AG04449 (cell line): ENCODE measurements at regions of chr2 and their contacts with region 1.

Region 1: GRCh38 chr2:62660582-62661262 is 44.8 kb upstream of the EHBP1 start:
- DNase-seq: peak; percentile 94
- H3K4me3 ChIP-seq: no peak overlapping the region
- CTCF ChIP-seq: no peak

Region 2: GRCh38 chr2:62398356-62398755 is 262.4 kb before region 1 on chr2:
- CTCF ChIA-PET with region 1: no interaction called
- POLR2A ChIA-PET with region 1: no interaction called
- DNase-seq: no peak
- H3K4me3 ChIP-seq: no peak overlapping the region
- CTCF ChIP-seq: no peak

Region 3: DNA sequence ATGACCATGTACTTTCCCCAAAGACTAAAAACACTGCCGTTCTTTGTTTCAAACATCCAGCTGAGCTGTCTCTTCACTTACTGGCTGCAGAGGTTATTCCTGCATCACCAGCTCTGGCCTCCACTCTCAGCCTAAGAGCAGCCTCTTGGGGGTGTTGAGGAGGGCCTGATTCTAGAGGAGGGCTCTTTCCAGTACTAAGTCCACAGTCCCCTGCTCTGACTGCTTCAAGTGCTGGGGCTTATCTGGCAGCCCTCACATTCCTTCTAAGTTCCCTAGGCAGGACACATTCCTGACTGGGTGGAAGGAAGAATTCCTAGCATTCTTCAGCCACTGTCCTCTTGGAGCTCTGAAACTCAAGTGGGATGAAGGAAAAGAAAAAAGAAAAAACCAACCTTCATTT is 11.9 kb after region 1 on chr2:
- CTCF ChIA-PET with region 1: interaction called, 4 read pairs
- POLR2A ChIA-PET with region 1: interaction called, 11 read pairs
- DNase-seq: peak; percentile 73
- H3K4me3 ChIP-seq: no peak overlapping the region
- CTCF ChIP-seq: no peak

Region 4: DNA sequence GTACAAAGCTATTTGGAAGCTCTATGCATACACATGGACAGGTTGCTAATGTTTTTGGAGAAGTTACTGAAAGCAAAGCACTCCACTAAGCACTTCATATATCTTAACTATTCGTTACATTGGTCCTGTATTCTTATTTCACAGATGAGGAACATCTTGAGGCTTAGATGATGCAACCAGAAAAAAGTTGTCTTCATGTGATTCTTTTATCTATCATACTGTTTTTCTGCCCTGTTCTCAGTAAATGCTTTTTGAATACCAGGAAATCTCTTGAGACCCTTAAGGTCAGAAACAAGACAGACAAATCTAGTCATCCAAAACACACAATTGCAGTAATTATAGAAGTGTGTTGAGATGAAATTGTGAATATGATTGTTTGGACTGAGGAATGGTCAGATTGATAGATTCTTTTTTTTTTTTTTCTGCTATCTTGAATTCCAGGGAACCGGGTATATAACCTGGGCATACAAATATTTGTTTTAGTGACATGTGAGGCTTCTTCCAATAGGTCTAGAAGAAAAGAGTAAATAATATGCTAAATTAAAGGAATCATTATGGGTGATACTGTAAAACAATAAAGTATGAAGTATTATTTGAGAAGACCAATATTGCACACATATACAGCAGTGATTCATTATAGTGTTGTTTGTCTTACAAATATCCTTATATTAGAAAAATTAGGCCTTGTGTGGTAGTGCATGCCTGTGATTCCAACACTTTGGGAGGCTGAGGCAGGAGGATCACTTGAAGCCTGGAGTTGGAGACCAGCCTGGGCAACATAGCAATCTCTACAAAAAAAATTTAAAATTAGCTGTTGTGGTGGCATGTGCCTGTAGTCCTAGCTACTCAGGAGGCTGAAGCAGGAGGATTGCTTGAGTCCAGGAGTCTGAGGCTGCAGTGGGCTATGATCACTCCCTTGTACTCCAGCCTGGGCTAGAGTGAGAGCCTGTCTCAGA is 78.5 kb after region 1 on chr2:
- CTCF ChIA-PET with region 1: no interaction called
- POLR2A ChIA-PET with region 1: no interaction called
- DNase-seq: no peak
- H3K4me3 ChIP-seq: no peak overlapping the region
- CTCF ChIP-seq: no peak

Region 5: GRCh38 chr2:62760555-62760954 is 99.8 kb after region 1 on chr2:
- CTCF ChIA-PET with region 1: no interaction called
- POLR2A ChIA-PET with region 1: no interaction called
- DNase-seq: no peak
- H3K4me3 ChIP-seq: no peak overlapping the region
- CTCF ChIP-seq: no peak